ENCODE measurements at regions of chr4 and their contacts with region 1.

Region 1: DNA sequence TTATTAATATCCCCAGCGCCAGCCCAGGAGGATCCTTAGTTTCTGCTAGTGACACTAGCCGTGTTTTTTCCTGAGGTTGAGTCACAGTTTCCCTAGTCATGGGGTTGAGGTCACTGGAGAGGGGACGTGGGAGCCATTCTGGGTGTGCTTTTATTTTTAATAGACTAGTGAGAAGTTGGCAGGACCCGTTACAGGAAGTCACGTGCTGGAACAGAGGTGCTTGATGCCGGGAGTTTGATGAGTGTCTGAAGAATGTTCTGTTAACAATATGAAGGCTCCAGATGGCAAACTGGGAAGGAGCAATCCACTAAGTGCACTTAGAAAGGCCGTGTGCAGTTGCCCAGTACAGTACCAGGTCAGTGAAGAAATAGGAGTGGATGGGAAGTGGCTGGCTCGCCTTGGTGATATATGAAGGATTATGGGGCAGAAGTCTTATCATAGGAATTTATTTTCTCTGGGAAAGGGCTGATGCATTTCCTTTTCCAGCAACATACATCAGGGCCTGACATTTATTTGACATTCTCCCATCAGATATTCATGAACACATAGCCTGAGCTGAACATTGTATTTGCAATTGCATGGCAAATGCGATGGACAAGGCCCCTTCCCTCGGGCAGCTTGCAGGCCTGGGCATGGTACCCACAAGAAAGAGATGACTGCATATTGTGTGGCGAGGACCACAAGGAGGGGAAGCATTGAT is 291.8 kb downstream of the FBXW7 start:
- DNase-seq: peak; percentile 24 to 70 (median 34)
- H3K4me3 ChIP-seq: no peak overlapping the region
- H3K27ac ChIP-seq: no peak overlapping the region
- H3K4me1 ChIP-seq: no peaks in the 10 kb centered on the region
- H3K27me3 ChIP-seq: no peaks in the 10 kb centered on the region
- CTCF ChIP-seq: no peak
- POLR2A ChIP-seq: no peak

Region 2: DNA sequence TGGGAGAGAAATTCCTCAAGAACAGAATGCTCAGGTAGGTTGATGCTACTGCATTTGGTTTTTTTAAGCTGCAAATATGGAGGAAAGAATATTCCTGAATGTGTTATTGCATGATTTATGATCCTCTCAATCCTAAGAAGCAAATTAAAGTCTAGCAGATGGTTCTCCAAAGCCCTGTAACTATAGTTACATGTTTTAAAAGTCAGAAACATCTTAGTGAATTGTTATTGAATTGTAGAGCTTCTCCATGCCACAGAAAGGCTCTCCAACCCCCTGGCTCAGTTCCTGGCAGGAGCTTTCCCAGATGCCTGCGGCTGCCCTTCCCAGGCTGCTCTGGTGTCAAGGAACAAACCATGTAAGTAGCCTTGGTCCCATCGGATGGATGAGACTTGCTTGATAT is 255.5 kb before region 1 on chr4:
- intact Hi-C with region 1: loop called in 1 of 2 experiments (anchors 5 kb)
- DNase-seq: no peak
- H3K4me3 ChIP-seq: no peak overlapping the region
- H3K27ac ChIP-seq: no peak overlapping the region
- H3K4me1 ChIP-seq: no peaks in the 10 kb centered on the region
- H3K27me3 ChIP-seq: no peaks in the 10 kb centered on the region
- CTCF ChIP-seq: no peak
- POLR2A ChIP-seq: no peak

Region 3: GRCh38 chr4:152850377-152850776 is 606.3 kb after region 1 on chr4:
- intact Hi-C with region 1: no loop called
- DNase-seq: peak in 6 of 7 donors; percentile 24 to 57 (median 40)
- H3K4me3 ChIP-seq: no peak overlapping the region
- H3K27ac ChIP-seq: peak overlapping the region in 1 of 5 donors; percentile 1
- H3K4me1 ChIP-seq: peaks cover 0 to 9% of the 10 kb centered on the region in 2 donors
- H3K27me3 ChIP-seq: no peaks in the 10 kb centered on the region
- CTCF ChIP-seq: no peak
- POLR2A ChIP-seq: no peak